ENCODE measurements at regions of chr22 and their contacts with region 1.

Region 1: GRCh38 chr22:42872821-42873220 is 15.7 kb upstream of the ARFGAP3 start:
- DNase-seq: no peak
- H3K4me3 ChIP-seq: no peak overlapping the region
- H3K27ac ChIP-seq: no peak overlapping the region
- H3K4me1 ChIP-seq: no peaks in the 10 kb centered on the region
- H3K27me3 ChIP-seq: no peaks in the 10 kb centered on the region
- CTCF ChIP-seq: no peak

Region 2: DNA sequence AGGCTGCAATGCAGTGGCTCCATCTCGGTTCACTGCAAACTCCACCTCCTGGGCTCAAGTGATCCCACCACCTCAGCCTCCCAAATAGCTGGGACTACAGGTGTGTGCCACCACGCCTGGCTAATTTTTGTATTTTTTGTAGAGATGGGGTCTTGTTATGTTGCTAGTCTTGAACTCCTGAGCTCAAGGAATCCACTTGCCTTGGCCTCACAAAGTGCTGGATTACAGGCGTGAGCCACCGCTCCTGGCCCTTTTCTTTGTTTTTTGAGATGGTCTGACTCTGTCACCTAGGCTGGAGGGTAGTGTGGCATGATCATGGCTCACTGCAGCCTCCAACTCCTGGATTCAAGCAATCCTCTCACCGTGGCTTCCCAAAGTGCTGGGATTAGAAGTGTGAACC is 36.8 kb before region 1 on chr22:
- CTCF ChIA-PET with region 1: no interaction called
- POLR2A ChIA-PET with region 1: interaction called, 12 read pairs
- intact Hi-C with region 1: no loop called
- DNase-seq: no peak
- H3K4me3 ChIP-seq: no peak overlapping the region
- H3K27ac ChIP-seq: no peak overlapping the region
- H3K4me1 ChIP-seq: peaks cover 9% of the 10 kb centered on the region
- H3K27me3 ChIP-seq: no peaks in the 10 kb centered on the region
- CTCF ChIP-seq: no peak

Region 3: GRCh38 chr22:43066844-43067385 is 194.1 kb after region 1 on chr22:
- CTCF ChIA-PET with region 1: no interaction called
- POLR2A ChIA-PET with region 1: no interaction called
- intact Hi-C with region 1: no loop called
- DNase-seq: no peak
- H3K4me3 ChIP-seq: no peak overlapping the region
- H3K27ac ChIP-seq: no peak overlapping the region
- H3K4me1 ChIP-seq: no peaks in the 10 kb centered on the region
- H3K27me3 ChIP-seq: no peaks in the 10 kb centered on the region
- CTCF ChIP-seq: no peak